Activated naive CD4-positive, alpha-beta T cell treated with anti-CD3 and anti-CD28 coated beads for 36 hours (primary cell): ENCODE measurements at regions of chr19 and their contacts with region 1.

Region 1: DNA sequence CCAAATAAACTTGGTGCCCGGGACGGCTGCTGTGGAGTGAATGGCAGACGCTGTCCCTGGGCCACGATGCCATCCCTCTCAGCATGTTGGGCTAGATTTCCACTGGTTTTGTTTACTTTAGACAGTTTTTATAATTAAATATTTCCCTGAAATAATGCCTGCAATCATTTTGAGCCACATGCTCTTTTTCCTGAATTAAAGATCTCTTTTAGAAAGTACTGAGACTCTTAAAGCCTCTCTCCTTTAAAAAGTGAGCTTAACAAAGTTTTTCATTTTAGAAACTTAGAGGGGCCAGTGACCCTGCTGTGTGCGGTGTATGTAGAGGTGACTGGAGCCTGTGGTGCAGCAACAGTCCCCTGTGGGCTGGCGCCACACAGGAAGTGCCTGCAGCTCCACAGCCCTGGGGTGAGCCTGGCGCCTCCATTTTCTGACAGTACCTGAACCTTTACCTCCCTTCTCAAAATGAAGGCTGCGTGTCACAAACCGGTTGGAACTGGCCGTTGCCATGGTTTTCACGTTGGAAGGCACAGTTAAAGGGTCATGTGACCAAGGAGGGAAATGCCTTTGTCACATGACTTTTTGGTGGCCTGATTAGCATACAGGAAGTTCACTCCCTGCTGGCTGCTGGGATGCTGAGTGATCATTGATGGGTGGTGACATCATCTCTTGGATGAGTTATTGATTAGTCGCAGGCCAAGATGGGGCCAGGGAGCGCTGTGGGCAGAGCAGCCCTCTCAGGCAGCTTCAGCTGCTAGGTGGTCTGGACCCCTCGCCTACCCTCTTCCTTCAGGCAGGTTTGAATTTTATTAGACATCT is 26.3 kb downstream of the TSSK6 start:
- DNase-seq: peak; percentile 97
- H3K4me3 Mint-ChIP-seq: peak overlapping the region; percentile 46
- H3K27ac Mint-ChIP-seq: peak overlapping the region; percentile 96
- H3K4me1 Mint-ChIP-seq: peaks cover 53% of the 10 kb centered on the region
- H3K27me3 Mint-ChIP-seq: no peaks in the 10 kb centered on the region

Region 2: GRCh38 chr19:19063183-19064097 is 425.6 kb before region 1 on chr19 and contains the start of gene SLC25A42:
- CTCF ChIA-PET with region 1: no interaction called
- intact Hi-C with region 1: loop called (anchors 1 kb)
- DNase-seq: peak; percentile 99
- H3K4me3 Mint-ChIP-seq: peak within 1 kb of the TSS; percentile 85
- H3K27ac Mint-ChIP-seq: peak within 1 kb of the TSS; percentile 83
- H3K4me1 Mint-ChIP-seq: peaks cover 41% of the 10 kb centered on the region
- H3K27me3 Mint-ChIP-seq: no peaks in the 10 kb centered on the region
- total RNA-seq, gene SLC25A42: 6.7 to 8.5 TPM

Region 3: GRCh38 chr19:19192078-19192882 is 296.8 kb before region 1 on chr19 and contains the starts of genes BORCS8 and RFXANK:
- CTCF ChIA-PET with region 1: no interaction called
- intact Hi-C with region 1: loop called (anchors 1 kb)
- DNase-seq: peak; percentile 100
- H3K4me3 Mint-ChIP-seq: peak within 1 kb of the TSS; percentile 93
- H3K27ac Mint-ChIP-seq: peak within 1 kb of the TSS; percentile 96
- H3K4me1 Mint-ChIP-seq: peaks cover 49% of the 10 kb centered on the region
- H3K27me3 Mint-ChIP-seq: no peaks in the 10 kb centered on the region
- total RNA-seq, gene BORCS8: 14.0 to 16.1 TPM
- total RNA-seq, gene RFXANK: 48.4 to 49.3 TPM

Region 4: DNA sequence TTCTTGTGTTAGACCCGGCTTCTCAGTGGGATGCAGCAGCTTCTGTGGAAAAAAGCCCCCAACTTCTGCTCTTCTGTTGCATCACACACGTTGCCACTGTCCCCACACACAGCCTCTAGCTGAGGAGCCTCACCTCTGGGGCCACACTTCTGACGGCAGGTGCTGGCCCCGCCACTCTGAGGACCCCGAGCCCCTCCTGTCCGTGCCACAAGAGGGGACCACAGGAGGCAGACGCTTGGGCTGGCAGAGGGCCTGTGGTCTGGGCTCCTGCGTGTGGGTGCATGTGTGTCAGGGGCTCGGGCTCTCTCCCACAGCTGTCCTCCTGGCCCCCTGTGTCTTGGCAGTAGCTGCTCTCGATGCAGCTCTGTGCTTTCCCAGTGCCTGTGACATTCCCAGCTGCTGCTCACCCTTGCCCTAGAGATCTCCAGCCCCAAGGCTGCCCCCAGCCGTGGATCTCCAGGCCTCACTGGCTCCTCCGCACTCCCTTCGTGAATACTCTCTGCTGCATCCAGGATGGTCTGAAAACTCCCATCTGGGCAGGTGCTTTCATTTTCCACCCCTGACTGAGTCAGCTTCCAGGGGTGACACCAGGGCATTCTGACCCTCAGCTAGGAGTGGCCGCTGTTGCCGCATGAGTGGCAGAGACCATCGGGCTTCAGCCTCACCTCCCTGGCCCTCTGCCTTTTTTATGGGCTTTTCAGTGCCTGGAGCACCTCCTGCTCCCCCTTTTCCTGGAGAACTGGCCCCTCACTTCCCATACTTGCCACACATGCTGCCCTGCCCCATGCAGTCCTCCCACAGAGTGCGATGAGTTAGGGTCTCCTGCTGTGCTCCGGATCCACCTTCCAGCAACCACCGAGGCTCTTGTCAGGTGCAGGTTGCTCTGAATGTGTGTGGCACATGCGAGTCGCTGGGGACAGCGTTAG is 154.8 kb before region 1 on chr19:
- CTCF ChIA-PET with region 1: interaction called, 10 read pairs
- intact Hi-C with region 1: no loop called
- DNase-seq: no peak
- H3K4me3 Mint-ChIP-seq: no peak overlapping the region
- H3K27ac Mint-ChIP-seq: no peak overlapping the region
- H3K4me1 Mint-ChIP-seq: peaks cover 2% of the 10 kb centered on the region
- H3K27me3 Mint-ChIP-seq: no peaks in the 10 kb centered on the region

Region 5: GRCh38 chr19:19366612-19367396 is 122.3 kb before region 1 on chr19:
- CTCF ChIA-PET with region 1: interaction called, 162 read pairs
- intact Hi-C with region 1: loop called (anchors 1 kb)
- DNase-seq: peak; percentile 76
- H3K4me3 Mint-ChIP-seq: no peak overlapping the region
- H3K27ac Mint-ChIP-seq: peak overlapping the region; percentile 18
- H3K4me1 Mint-ChIP-seq: peaks cover 16% of the 10 kb centered on the region
- H3K27me3 Mint-ChIP-seq: no peaks in the 10 kb centered on the region

Region 6: DNA sequence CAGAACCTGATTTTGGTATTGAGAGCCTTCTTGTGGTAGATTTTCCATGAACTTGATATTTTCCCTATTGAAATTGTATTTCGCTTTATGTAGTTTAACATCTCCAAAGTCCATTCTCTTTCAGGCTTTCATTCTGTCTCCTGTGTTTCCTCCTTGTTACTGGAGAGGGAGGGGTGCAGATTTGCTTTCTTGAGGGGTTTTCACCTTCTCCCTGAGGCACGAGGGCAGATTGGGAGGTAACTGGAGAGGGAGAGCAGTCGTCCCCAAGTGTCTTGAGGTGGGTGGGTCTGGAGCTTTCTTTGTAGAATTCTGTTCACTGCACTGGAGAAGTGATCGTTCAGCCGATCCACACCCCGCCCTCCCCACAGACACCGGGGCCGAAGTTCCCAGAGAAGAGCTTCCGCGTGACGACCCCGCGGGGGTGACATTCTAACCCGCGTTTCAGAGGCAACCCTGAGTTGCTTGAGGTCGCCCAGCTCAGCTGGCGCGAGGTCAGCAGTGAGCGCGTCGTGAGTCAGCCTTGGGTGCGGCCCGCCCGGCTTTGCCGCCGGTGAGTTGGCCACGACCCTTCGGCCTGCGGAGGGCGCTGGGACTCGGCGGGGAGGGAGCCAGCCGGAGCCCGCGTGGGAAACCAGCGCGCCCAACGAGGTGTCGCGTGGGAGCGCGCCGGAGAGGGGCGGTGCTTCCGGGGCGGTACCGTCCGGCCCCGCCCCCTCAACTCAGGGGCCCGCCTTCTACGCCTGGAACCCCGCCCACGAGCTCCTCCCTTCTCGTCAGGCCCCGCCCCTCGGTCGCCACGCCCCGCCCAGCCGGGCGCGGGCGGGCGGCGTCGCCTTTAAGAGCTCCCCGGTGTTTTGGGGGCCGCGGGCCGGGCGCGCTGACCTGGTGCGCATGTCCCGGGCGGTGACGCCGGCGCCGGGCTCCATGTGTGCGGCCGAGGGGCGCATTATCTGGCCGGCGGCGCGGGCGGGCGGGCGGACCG is 83.9 kb before region 1 on chr19 and contains the start of gene GATAD2A:
- CTCF ChIA-PET with region 1: interaction called, 16 read pairs
- intact Hi-C with region 1: loop called (anchors 1 kb)
- DNase-seq: peak; percentile 88
- H3K4me3 Mint-ChIP-seq: peak within 1 kb of the TSS; percentile 86
- H3K27ac Mint-ChIP-seq: peak within 1 kb of the TSS; percentile 91
- H3K4me1 Mint-ChIP-seq: peaks cover 63% of the 10 kb centered on the region
- H3K27me3 Mint-ChIP-seq: no peaks in the 10 kb centered on the region
- total RNA-seq, gene GATAD2A: 91.2 to 100 TPM

Region 7: DNA sequence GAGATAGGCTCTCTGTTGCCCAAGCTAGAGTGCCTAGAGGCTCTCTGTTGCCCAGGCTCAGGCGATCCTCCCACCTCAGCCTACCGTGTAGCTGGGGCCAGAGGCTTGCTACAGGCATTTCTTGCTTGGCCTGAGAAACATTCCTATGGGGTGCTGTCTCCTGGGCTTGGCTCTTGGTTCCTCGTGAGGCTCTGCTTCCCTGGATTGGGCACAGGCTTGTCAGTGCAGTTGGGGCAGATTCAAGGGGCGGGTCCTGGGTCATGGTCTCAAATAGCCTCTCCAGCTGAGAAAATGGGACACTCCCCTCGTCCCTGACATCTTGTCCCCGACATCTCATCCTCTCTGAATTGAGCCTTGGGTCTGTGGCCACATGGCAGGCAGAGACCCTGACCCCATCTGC is 21.3 kb after region 1 on chr19:
- CTCF ChIA-PET with region 1: interaction called, 11 read pairs
- intact Hi-C with region 1: no loop called
- DNase-seq: no peak
- H3K4me3 Mint-ChIP-seq: no peak overlapping the region
- H3K27ac Mint-ChIP-seq: no peak overlapping the region
- H3K4me1 Mint-ChIP-seq: peaks cover 2% of the 10 kb centered on the region
- H3K27me3 Mint-ChIP-seq: no peaks in the 10 kb centered on the region

Region 8: GRCh38 chr19:19526581-19527370 is 37.7 kb after region 1 on chr19:
- CTCF ChIA-PET with region 1: no interaction called
- intact Hi-C with region 1: no loop called
- DNase-seq: no peak
- H3K4me3 Mint-ChIP-seq: no peak overlapping the region
- H3K27ac Mint-ChIP-seq: no peak overlapping the region
- H3K4me1 Mint-ChIP-seq: peaks cover 10% of the 10 kb centered on the region
- H3K27me3 Mint-ChIP-seq: no peaks in the 10 kb centered on the region